K562 (cell line): ENCODE measurements at regions of chr3 and their contacts with region 1.

Region 1: DNA sequence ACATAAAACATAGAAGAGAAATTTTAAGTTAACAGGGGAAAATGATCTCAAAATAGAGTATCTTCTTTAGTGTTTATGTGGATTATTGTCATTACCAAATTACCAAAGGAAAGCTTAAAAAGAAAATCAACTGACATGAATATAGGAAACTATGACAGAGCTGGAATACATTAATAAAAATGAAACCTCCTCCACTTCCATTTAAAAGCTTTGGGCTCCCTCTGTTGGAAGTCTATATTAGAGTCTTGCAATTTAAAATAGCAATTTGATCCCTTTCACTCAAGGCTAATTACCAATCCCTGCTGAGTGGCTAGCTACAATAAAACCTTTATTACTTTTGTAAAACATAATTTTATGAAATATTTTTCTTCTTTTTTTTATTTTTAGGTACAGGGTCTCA is 61.4 kb upstream of the IMPG2 start:
- DNase-seq: peak in 3 of 4 experiments; percentile 8 to 37 (median 20)
- ATAC-seq: peak; percentile 61
- H3K4me3 ChIP-seq: no peak overlapping the region
- H3K27ac ChIP-seq: no peak overlapping the region
- H3K4me1 ChIP-seq: peaks cover 0 to 7% of the 10 kb centered on the region in 2 experiments; a peak in 2 of 5 replicates
- H3K27me3 ChIP-seq: no peaks in the 10 kb centered on the region
- CTCF ChIP-seq: peak; percentile 10 to 57 (median 31); a peak in 3 of 6 replicates
- EP300 ChIP-seq: no peak
- POLR2A ChIP-seq: no peak
- RAD21 ChIP-seq: peak; percentile 32 to 75; a peak in 3 of 4 replicates

Region 2: GRCh38 chr3:99520513-99520912 is 1861.3 kb before region 1 on chr3:
- CTCF ChIA-PET with region 1: no interaction called
- POLR2A ChIA-PET with region 1: no interaction called
- in situ Hi-C with region 1: no loop called
- intact Hi-C with region 1: no loop called
- DNase-seq: no peak
- ATAC-seq: no peak
- H3K4me3 ChIP-seq: no peak overlapping the region
- H3K27ac ChIP-seq: no peak overlapping the region
- H3K4me1 ChIP-seq: no peaks in the 10 kb centered on the region
- H3K27me3 ChIP-seq: no peaks in the 10 kb centered on the region
- CTCF ChIP-seq: no peak
- EP300 ChIP-seq: no peak
- POLR2A ChIP-seq: no peak
- RAD21 ChIP-seq: no peak

Region 3: GRCh38 chr3:101069901-101070798 is 311.7 kb before region 1 on chr3:
- CTCF ChIA-PET with region 1: interaction called, 6 read pairs
- POLR2A ChIA-PET with region 1: no interaction called
- in situ Hi-C with region 1: no loop called
- intact Hi-C with region 1: loop called (anchors 5 kb)
- DNase-seq: peak; percentile 36 to 79 (median 52)
- ATAC-seq: peak; percentile 99
- H3K4me3 ChIP-seq: no peak overlapping the region
- H3K27ac ChIP-seq: no peak overlapping the region
- H3K4me1 ChIP-seq: no peaks in the 10 kb centered on the region
- H3K27me3 ChIP-seq: no peaks in the 10 kb centered on the region
- CTCF ChIP-seq: peak; percentile 82 to 89 (median 86)
- EP300 ChIP-seq: no peak
- POLR2A ChIP-seq: no peak
- RAD21 ChIP-seq: peak; percentile 73 to 89

Region 4: DNA sequence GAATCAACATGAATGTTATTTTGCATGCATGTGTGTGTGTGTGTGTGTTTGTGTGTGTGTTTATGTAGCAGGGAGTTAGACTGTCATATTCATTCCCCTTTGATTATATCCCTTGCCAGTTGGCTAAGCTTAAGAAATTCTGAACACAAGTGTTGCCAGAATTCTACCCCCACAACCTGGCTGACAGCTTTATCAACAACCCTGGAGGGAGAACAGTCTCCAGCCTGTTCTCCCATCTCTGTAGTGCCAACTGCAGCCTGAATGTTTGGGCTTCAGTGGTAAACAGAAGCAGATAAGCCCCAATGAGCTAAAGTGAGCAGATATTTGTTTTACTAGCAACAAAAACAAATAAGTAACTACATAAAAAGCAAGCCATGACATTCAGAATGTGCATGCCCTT is 226.0 kb before region 1 on chr3:
- CTCF ChIA-PET with region 1: no interaction called
- POLR2A ChIA-PET with region 1: no interaction called
- in situ Hi-C with region 1: no loop called
- intact Hi-C with region 1: no loop called
- DNase-seq: no peak
- ATAC-seq: no peak
- H3K4me3 ChIP-seq: no peak overlapping the region
- H3K27ac ChIP-seq: no peak overlapping the region
- H3K4me1 ChIP-seq: peaks cover 0 to 5% of the 10 kb centered on the region in 2 experiments; a peak in 2 of 5 replicates
- H3K27me3 ChIP-seq: no peaks in the 10 kb centered on the region
- CTCF ChIP-seq: no peak
- EP300 ChIP-seq: no peak
- POLR2A ChIP-seq: no peak
- RAD21 ChIP-seq: no peak

Region 5: DNA sequence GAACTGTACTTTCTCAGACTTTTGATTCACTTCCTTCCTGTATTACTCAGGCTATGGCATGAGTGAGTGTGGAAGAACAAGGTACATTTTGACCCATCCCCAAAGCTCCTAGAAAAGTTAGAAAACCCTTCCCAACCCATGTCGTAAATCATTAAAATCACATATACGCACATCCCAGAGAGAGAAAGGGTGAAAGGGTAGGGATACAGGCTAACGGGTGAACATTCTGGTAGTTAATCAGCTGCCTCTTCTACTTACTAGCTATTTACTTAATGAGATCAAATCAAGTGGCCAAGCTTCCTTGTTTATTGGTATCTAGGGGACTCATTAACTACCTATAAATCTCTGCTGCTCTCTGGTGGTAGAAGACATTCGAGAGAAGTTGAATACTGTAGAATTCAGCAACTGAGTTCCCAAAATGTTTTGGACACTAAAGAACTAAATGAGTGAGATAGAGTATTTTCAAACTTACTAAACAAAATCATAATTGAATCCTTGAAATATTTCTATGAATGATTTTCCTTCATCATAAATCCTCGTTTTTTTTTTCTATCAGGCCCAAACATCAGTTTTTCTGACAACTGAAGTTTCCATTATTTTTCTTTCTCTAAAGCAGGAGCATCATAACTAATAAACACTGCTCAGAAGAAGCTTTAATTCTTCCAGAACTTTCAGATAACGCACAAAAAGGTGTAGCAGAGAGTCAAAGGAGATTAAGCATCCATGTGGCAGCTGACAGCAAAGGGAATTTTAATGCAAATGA is 185.7 kb before region 1 on chr3:
- CTCF ChIA-PET with region 1: no interaction called
- POLR2A ChIA-PET with region 1: interaction called, 3 read pairs
- in situ Hi-C with region 1: no loop called
- intact Hi-C with region 1: loop called (anchors 2 kb)
- DNase-seq: peak in 2 of 4 experiments; percentile 15 to 43
- ATAC-seq: peak; percentile 72
- H3K4me3 ChIP-seq: no peak overlapping the region
- H3K27ac ChIP-seq: no peak overlapping the region
- H3K4me1 ChIP-seq: no peaks in the 10 kb centered on the region
- H3K27me3 ChIP-seq: no peaks in the 10 kb centered on the region
- CTCF ChIP-seq: peak; percentile 32 to 69 (median 43); a peak in 3 of 6 replicates
- EP300 ChIP-seq: no peak
- POLR2A ChIP-seq: no peak
- RAD21 ChIP-seq: peak; percentile 91 to 96

Region 6: DNA sequence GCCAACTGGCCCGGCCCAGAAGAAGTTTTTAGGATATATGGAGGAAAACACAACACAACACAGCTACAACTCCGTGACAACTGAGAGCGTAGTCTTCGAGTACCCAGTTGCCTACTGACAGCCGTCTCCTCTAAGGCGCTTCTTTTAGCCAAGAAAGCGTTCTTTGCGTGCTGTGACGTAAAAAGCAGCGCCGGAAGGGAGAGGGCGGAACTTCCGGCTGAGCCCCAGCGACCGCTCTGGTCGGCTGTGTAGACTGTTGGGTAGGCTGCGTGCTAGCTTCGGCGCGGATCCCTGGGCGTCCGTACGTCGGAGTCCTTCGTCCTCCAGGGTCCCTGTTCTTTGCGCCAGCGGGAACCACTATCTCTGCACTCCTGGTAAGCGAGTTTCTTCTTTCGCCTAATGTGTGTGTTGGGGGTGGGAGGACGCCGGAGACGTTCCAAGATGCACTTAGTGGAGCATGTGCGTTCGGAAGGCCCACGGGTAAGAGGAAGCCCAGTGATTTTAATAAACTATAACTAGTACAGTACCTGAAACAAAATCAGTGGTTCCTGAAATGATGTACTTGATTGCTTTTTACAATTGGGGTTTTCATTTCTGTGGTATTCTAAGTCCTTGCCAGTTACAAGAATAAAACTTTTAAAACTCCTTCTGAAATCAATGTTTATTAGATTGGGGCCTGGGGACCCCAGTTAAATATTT is 180.0 kb after region 1 on chr3 and contains the start of gene TRMT10C:
- CTCF ChIA-PET with region 1: no interaction called
- POLR2A ChIA-PET with region 1: no interaction called
- in situ Hi-C with region 1: no loop called
- intact Hi-C with region 1: loop called (anchors 10 kb)
- DNase-seq: peak; percentile 75 to 93 (median 80)
- ATAC-seq: peak; percentile 95
- H3K4me3 ChIP-seq: peak within 1 kb of the TSS; percentile 94
- H3K27ac ChIP-seq: peak within 1 kb of the TSS; percentile 96
- H3K4me1 ChIP-seq: peaks cover under 1 to 8% of the 10 kb centered on the region in 2 experiments; a peak in 3 of 5 replicates
- H3K27me3 ChIP-seq: no peaks in the 10 kb centered on the region
- CTCF ChIP-seq: no peak
- EP300 ChIP-seq: 0 out of 2 replicates have a peak, but pooled peaks have one; percentile 29
- POLR2A ChIP-seq: peak; percentile 91
- RAD21 ChIP-seq: 0 out of 4 replicates have a peak, but pooled peaks of 1 of the 2 experiments have one; percentile 3
- polyA plus RNA-seq, gene TRMT10C: 101 to 106 TPM

Region 7: GRCh38 chr3:101635954-101636798 is 254.4 kb after region 1 on chr3:
- CTCF ChIA-PET with region 1: no interaction called
- POLR2A ChIA-PET with region 1: no interaction called
- in situ Hi-C with region 1: no loop called
- intact Hi-C with region 1: loop called (anchors 10 kb)
- DNase-seq: peak; percentile 40 to 85 (median 56)
- ATAC-seq: peak; percentile 69
- H3K4me3 ChIP-seq: peak overlapping the region; percentile 63
- H3K27ac ChIP-seq: peak overlapping the region; percentile 86
- H3K4me1 ChIP-seq: peaks cover 0 to 5% of the 10 kb centered on the region in 2 experiments; a peak in 3 of 5 replicates
- H3K27me3 ChIP-seq: no peaks in the 10 kb centered on the region
- CTCF ChIP-seq: peak; percentile 54 to 73 (median 72)
- EP300 ChIP-seq: no peak
- POLR2A ChIP-seq: no peak
- RAD21 ChIP-seq: peak in 1 of 2 experiments; percentile 51; a peak in 3 of 4 replicates